Cardiac septum (tissue), 1 donor: ENCODE measurements at regions of chr3 and their contacts with region 1.

Region 1: GRCh38 chr3:128481438-128481942 is 11.5 kb downstream of the GATA2 start:
- DNase-seq: peak; percentile 84

Region 2: DNA sequence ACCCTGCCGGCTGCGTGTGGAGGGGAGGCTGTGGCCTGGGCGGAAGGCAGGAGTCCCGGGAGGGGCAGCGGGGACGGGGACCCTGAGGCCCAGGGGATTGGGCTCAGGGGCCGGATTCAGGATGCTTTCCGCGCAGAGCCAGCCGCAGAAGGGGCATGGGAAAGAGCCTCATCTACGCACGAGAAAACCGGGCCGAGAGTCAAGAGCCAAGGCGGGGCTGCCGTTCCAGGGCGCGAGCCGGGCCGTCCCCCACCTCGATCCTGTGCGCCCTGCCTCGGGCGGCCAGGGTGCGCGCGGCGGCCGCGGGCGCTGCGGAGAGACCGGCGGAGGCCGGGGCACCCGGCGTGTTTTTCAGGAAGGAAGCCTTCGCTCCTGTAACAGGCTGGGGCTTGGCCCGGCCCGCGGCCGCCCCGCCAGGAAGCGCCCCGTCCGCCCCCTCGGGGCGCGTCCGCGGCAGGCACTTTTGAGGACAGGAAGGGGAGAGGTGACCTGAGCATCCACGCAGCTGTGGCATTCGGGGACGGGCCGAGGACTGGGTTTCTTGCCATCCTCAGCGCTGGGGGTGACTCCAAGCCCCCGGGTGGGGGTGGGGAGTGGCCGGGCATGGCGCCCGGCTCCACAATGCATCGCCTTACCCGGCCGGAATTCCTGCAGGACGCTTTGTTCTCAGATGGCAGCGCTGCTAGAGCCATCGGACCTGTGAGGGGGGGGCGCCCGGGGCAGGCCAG is 73.8 kb after region 1 on chr3:
- intact Hi-C with region 1: loop called (anchors 2 kb)
- DNase-seq: no peak

Region 3: GRCh38 chr3:128573707-128574162 is 92.2 kb after region 1 on chr3:
- intact Hi-C with region 1: loop called (anchors 2 kb)
- DNase-seq: no peak